Ovary (tissue), 10 donors: ENCODE measurements at regions of chr11 and their contacts with region 1.

Region 1: GRCh38 chr11:48354677-48355076 is 11.6 kb downstream of the OR4C5 start:
- DNase-seq: no peak
- H3K4me3 ChIP-seq: no peak overlapping the region
- H3K27ac ChIP-seq: no peak overlapping the region
- H3K4me1 ChIP-seq: no peaks in the 10 kb centered on the region
- H3K27me3 ChIP-seq: no peaks in the 10 kb centered on the region
- CTCF ChIP-seq: no peak
- EP300 ChIP-seq: no peak
- POLR2A ChIP-seq: no peak

Region 2: GRCh38 chr11:50030193-50030592 is 1675.5 kb after region 1 on chr11:
- intact Hi-C with region 1: loop called in 1 of 4 experiments (anchors 5 kb)
- DNase-seq: no peak
- H3K4me3 ChIP-seq: no peak overlapping the region
- H3K27ac ChIP-seq: no peak overlapping the region
- H3K4me1 ChIP-seq: no peaks in the 10 kb centered on the region
- H3K27me3 ChIP-seq: no peaks in the 10 kb centered on the region
- CTCF ChIP-seq: no peak
- EP300 ChIP-seq: no peak
- POLR2A ChIP-seq: no peak